ENCODE measurements at regions of chr5 and their contacts with region 1.

Region 1: DNA sequence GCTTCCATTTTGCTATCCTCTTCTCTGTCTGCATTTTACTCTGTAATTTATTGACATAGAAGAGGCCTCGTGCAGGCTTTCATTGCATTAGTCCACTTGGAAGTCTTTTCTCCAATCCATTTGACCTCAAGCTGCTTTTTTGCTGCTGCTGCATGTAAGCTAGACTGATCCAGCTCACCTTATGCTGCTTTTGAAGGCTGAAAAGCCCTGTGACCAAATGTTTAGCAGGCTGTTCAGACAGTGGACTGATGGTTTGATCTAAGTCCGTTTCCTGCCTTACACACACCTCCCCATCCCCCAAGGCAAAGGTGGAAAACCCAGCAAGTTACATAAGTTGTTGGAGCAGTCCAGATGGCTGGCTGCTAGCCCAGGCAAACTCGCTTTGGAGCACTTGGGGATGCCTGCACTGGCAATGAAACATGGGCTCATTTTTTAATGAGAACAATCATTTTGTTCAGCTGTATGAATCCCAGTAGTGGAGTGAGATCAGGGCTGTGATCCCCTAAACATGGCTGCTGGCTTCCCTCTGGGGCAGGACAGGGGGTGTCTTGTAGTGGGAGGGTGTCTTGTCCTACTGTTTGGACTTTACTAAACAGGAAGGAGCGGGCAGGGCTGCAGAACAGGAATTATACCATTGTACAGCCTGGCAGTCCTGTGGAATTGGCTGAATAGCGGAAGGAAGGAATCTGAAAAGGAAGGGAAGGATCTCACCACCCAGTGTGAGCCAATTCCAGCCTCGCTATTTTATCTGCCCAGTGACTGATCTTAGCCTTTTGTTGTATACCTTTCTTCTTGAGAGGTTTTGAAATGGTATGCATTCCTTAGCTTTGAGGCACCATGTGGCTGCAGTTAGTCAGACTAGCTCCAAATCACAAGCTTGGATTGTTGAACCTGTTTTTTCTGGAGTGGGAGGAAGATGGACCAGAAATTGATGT is 212.0 kb downstream of the ARHGAP26 start:
- DNase-seq: peak; percentile 94
- H3K4me3 ChIP-seq: peak overlapping the region in 2 of 3 experiments; percentile 1 to 9
- H3K27ac ChIP-seq: peak overlapping the region; percentile 82
- H3K4me1 ChIP-seq: peaks cover 59% of the 10 kb centered on the region
- H3K27me3 ChIP-seq: no peaks in the 10 kb centered on the region
- CTCF ChIP-seq: no peak

Region 2: DNA sequence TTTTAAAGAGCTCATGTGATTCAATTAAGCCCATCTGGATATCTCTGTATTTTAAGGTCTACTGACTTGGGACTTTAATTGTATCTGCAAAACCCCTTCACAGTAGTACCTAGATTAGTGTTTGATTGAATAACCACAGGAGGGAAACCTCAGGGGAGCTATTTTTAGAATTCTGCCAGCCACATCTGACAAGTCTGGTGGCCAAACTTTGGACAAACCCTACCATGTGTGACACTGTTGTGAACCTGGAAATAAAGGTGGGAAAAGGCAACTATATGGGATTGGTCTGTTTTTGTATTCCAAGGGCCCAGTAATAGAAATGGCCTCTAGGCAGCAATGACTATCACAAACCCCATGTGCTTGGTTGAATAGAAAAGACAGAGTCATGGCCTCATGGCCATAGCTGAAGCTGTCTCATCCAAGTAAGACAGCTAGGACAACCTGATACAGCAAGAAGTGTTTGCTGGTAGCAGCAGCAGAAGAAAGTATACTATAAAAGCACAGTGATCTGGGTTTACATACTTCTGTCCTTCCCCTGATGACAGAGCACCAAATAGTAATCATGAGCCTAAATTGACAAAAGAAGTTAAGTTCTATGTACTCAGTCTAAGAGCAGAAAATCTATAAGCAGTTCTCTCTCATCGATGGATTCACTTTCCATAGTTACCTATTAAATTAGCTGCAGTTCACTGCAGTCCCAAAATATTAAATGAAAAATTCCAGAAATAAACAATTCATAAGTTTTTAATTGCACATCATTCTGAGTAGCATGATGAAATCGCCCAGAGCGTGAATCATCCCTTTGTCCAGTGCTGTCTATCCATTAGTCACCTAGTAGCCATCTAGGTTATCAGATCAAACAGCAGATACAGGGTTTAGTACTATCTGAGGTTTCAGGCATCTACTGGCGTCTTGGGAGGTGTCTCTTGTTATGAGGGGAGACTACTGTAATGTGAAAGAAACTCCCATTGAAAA is 22.2 kb before region 1 on chr5:
- CTCF ChIA-PET with region 1: no interaction called
- dilution Hi-C with region 1: no loop called
- in situ Hi-C with region 1: no loop called
- intact Hi-C with region 1: loop called (anchors 2 kb)
- DNase-seq: peak; percentile 88
- H3K4me3 ChIP-seq: no peak overlapping the region
- H3K27ac ChIP-seq: peak overlapping the region; percentile 70
- H3K4me1 ChIP-seq: peaks cover 20% of the 10 kb centered on the region
- H3K27me3 ChIP-seq: no peaks in the 10 kb centered on the region
- CTCF ChIP-seq: no peak

Region 3: GRCh38 chr5:143592648-143593047 is 610.5 kb after region 1 on chr5:
- CTCF ChIA-PET with region 1: no interaction called
- dilution Hi-C with region 1: no loop called
- in situ Hi-C with region 1: no loop called
- intact Hi-C with region 1: no loop called
- DNase-seq: no peak
- H3K4me3 ChIP-seq: no peak overlapping the region
- H3K27ac ChIP-seq: no peak overlapping the region
- H3K4me1 ChIP-seq: peaks cover 24% of the 10 kb centered on the region
- H3K27me3 ChIP-seq: no peaks in the 10 kb centered on the region
- CTCF ChIP-seq: no peak

Region 4: DNA sequence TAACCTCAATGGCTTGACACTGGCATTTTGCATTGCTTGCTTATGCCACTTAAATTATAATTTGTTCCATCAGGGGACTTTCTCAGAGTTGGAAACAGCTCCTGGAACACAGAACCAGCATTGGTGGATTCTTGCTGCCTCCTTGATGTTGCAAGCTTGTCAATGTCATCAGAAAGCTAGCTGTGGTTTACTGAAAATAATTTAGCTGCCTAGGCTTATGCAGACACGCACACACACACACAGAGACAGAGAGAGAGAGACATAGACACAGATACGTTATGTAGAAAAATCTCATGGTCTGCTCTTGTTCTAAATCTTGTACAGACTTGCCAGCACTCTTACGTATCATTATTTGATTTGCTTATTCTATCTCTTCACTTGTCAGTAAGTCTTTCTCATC is 907.8 kb after region 1 on chr5:
- CTCF ChIA-PET with region 1: interaction called, 17 read pairs
- dilution Hi-C with region 1: no loop called
- in situ Hi-C with region 1: no loop called
- intact Hi-C with region 1: no loop called
- DNase-seq: peak; percentile 74
- H3K4me3 ChIP-seq: no peak overlapping the region
- H3K27ac ChIP-seq: no peak overlapping the region
- H3K4me1 ChIP-seq: peaks cover 15% of the 10 kb centered on the region
- H3K27me3 ChIP-seq: no peaks in the 10 kb centered on the region
- CTCF ChIP-seq: no peak

Measured in mammary epithelial cell (primary cell).